Esophagus muscularis mucosa (tissue), 4 donors: ENCODE measurements at regions of chr11 and their contacts with region 1.

Region 1: DNA sequence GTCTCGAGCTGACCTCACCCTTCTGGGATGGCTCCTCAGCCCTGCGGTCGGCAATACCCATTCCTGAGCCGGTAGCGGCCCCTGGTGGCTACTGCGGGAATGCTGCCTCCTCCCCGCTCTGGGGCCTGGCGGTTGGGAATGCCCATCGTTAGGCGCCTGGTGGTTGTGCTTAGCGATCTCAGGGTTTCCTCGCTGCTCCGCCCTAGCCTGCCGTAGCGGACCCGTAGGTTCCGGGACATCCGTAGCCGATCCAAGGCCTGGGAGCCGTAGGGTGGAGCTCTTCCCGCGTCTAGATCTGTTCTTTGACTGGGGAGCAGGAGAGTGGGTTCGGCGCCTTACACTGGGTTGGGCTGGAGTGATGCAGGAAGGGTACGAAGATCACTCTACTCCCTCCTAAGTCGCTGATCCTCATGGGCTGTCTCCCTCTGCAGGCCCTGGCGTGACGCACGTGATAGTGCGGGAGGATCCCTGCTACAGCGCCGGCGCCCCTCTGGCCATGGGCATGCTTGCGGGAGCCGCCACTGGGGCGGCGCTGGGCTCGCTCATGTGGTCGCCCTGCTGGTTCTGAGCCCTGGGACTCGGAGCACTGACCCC is 14.8 kb downstream of the PLEKHB1 start:
- DNase-seq: peak; percentile 95
- H3K4me3 ChIP-seq: peak overlapping the region; percentile 36 to 50 (median 45)
- H3K27ac ChIP-seq: peak overlapping the region in 2 of 4 donors; percentile 39 to 44
- H3K4me1 ChIP-seq: peaks cover 19 to 32% (median 26%) of the 10 kb centered on the region in 4 donors
- H3K27me3 ChIP-seq: no peaks in the 10 kb centered on the region
- CTCF ChIP-seq: peak; percentile 93 to 98 (median 94)
- EP300 ChIP-seq: no peak
- POLR2A ChIP-seq: no peak

Region 2: DNA sequence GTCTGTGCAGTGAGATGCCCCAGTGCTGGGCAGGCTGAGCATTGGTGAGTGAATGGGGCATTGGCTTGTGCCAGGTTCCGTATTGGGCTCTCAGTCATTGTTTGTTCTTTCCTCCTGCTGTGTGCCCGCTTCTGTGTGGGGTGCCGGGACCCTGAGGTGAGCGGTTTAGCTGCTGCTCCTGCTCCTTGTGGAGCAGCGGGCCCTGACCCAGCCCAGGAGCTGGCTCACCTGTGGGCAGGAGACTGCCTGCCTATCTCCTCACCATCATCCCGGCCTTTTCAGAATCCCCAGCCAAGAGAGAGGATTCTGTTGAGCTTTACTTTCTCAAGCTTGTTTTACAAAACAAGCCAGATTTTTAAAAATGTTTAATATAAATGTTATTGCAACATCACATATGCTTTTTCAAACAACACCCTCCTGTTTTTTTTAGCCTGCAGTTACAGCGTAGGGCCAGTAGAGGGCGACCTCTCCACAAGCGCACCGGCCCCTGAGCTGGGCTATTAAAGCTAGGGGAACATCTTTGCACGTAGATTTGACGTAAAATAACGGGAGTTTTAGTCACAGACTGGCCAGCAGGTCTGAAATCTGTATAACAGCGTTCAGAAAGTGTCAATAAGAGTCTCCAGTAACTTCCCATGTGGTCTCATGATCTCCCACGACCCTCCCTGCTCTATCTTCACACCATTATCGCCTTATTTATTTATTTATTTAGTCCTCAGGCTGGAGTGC is 310.1 kb before region 1 on chr11:
- intact Hi-C with region 1: loop called (anchors 5 kb)
- DNase-seq: no peak
- H3K4me3 ChIP-seq: no peak overlapping the region
- H3K27ac ChIP-seq: peak overlapping the region; percentile 59 to 71 (median 66)
- H3K4me1 ChIP-seq: peaks cover 0 to 39% (median 34%) of the 10 kb centered on the region in 4 donors
- H3K27me3 ChIP-seq: no peaks in the 10 kb centered on the region
- CTCF ChIP-seq: peak; percentile 93 to 98 (median 97)
- EP300 ChIP-seq: no peak
- POLR2A ChIP-seq: no peak

Region 3: DNA sequence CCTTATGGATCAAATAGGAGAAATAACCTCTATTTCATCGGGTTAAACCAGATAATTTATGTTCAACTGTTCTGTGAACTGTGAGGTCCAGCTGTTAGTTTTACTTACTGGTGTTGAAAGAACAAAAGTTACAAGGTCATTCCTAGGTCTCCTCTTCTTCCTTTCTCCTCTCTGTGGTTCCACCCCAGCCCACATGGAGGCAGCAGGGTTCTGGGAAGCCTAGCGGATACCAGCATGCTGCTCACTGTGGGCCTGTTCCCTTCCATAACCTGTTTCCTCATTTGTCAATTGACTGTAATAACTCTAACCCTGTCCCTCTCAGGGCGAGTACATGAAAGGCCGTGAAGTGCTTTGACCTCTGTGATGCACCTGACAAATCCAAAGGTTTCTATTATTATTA is 257.1 kb before region 1 on chr11:
- intact Hi-C with region 1: loop called (anchors 2 kb)
- DNase-seq: no peak
- H3K4me3 ChIP-seq: no peak overlapping the region
- H3K27ac ChIP-seq: peak overlapping the region in 1 of 4 donors; percentile 61
- H3K4me1 ChIP-seq: peaks cover 7 to 20% (median 13%) of the 10 kb centered on the region in 4 donors
- H3K27me3 ChIP-seq: no peaks in the 10 kb centered on the region
- CTCF ChIP-seq: peak; percentile 73 to 81 (median 79)
- EP300 ChIP-seq: no peak
- POLR2A ChIP-seq: no peak

Region 4: DNA sequence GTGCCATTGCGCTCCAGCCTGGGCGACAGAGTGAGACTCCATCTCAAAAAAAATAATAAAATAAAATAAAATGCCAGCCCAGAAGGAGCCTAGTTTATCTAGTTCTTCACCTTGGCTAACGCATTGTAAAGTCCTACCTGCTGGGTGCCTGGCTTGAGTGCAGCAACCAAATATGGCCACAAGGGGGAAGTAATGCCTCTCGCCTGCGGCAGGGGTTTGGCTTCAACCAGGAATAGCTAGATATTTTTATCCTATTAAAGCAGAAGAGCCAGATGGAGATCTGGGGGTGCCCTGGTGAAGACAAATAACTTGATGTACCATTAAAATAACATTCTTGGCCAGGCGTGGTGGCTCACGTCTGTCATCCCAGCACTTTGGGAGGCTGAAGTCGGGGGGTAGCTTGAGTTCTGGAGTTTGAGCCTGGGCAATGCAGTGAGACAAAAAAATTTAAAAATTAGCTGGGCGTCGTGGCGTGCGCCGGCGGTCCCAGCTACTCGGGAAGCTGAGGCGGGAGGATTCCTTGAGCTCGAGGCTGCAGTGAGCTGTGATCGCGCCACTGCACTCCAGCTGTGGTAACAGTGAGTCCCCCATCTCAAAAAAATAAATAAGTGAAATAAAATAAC is 35.3 kb before region 1 on chr11:
- intact Hi-C with region 1: loop called (anchors 2 kb)
- DNase-seq: no peak
- H3K4me3 ChIP-seq: peak overlapping the region; percentile 28 to 40 (median 36)
- H3K27ac ChIP-seq: no peak overlapping the region
- H3K4me1 ChIP-seq: peaks cover 4 to 10% (median 9%) of the 10 kb centered on the region in 4 donors
- H3K27me3 ChIP-seq: peaks cover 0 to 30% (median 0%) of the 10 kb centered on the region in 4 donors
- CTCF ChIP-seq: peak; percentile 82 to 98 (median 86)
- EP300 ChIP-seq: no peak
- POLR2A ChIP-seq: no peak

Region 5: GRCh38 chr11:73716101-73717056 is 55.2 kb after region 1 on chr11:
- intact Hi-C with region 1: no loop called
- DNase-seq: no peak
- H3K4me3 ChIP-seq: no peak overlapping the region
- H3K27ac ChIP-seq: no peak overlapping the region
- H3K4me1 ChIP-seq: peaks cover 0 to 11% (median 4%) of the 10 kb centered on the region in 4 donors
- H3K27me3 ChIP-seq: no peaks in the 10 kb centered on the region
- CTCF ChIP-seq: no peak
- EP300 ChIP-seq: no peak
- POLR2A ChIP-seq: no peak

Region 6: DNA sequence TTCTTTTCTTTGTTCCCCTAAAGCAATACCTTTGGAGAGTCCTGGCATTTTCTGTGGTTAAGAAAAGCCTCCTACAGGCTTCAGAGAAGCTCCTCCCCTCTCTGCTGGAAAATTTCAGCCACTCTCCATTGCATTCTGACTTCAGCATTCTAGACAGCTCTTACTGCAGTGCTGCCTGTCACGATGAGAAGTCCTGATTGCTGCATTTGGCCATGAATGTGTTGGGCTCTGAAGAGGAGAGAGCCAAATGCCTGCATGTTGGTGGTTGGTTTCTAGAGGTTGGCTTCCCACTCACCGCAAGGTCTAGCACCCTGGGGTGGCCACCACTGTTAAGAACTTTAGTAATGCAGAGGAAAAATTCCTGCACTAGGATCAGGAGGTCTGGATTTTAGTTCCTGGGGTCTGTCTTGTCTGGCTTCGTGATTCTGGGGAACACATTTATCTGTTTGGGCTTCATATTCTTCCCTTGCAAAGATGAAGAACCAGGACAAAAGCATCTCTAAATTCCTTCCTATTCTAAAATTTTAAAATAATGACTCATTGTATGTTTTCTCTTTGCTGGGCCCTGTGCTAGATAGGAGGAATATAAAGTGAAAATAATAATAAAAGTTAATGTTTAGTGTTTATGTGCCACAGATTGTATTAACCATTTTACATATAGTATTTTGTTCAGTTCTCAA is 177.5 kb after region 1 on chr11:
- intact Hi-C with region 1: no loop called
- DNase-seq: no peak
- H3K4me3 ChIP-seq: no peak overlapping the region
- H3K27ac ChIP-seq: no peak overlapping the region
- H3K4me1 ChIP-seq: no peaks in the 10 kb centered on the region
- H3K27me3 ChIP-seq: no peaks in the 10 kb centered on the region
- CTCF ChIP-seq: no peak
- EP300 ChIP-seq: no peak
- POLR2A ChIP-seq: no peak